Activated T-helper 1 cell treated with anti-CD3 and anti-CD28 coated beads, Interleukin-12 subunit alpha, Interleukin-12 subunit beta, Interleukin-2, Interleukin-4 antibody, amounts not matched to agents 30 ng/mL and 10 ng/mL and 1 ng/mL, durations not matched to agents 14 hours and 24 hours and 36 hours (primary cell): ENCODE measurements at regions of chr2 and their contacts with region 1.

Region 1: DNA sequence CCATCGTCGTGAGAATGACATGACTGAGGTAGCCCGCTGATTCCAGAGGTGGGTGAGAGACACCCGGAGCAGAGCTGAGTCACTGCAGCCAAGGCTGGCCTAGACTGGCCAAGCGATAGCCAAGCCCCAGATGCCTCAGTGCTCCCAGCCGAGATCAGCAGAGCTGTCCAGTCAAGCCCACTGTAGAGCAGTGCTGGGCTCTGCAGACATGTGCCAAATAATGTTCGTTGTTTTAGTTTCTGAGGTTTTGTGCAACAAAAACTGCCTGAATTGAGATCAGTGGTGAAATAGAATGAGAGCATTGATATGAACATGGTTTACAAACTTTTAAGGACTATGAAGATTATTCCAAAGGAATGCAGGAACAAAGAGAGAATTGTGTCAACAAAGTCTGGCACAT is 42.1 kb downstream of the INSIG2 start:
- DNase-seq: no peak
- H3K4me3 Mint-ChIP-seq: no peak overlapping the region
- H3K27ac Mint-ChIP-seq: no peak overlapping the region
- H3K4me1 Mint-ChIP-seq: peaks cover 14% of the 10 kb centered on the region
- H3K27me3 Mint-ChIP-seq: peaks cover 4% of the 10 kb centered on the region

Region 2: DNA sequence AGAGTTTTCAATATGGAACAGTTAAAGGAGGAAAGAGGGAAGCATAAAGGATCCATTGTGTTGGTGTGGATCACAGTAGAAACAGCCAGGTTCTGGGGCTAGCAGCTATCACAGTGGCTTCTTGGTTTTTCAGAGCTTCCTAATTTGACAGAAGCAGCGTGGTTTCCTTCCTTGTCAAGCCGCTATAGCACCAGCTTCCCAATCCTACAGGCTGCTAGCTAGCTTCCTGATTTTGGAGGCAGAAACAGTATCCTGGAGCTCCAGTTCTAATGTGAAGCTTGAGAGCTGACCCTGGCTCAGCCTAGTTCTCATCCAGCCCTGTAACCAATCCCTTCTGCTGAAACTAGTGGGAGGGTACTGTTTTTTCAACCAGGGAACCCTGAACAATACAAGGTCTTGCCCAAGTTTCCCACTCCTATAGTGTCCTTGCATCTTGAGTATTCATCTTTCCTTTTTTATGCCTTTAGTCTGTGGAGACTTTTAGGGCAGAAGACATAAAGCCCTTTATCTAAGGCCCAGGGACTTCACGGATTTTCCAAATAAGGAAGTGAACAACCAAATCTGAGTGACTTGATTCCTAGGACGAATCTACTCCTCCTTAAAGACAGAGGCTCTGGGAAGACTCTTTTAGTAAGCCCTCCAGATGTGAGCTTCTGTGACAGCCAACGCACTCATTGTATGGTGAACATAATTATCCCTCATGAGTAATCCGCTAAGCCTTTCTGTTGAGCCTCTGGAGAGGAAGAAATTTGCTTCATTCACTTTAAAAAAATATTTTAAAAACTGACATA is 150.3 kb before region 1 on chr2:
- intact Hi-C with region 1: no loop called
- DNase-seq: no peak
- H3K4me3 Mint-ChIP-seq: no peak overlapping the region
- H3K27ac Mint-ChIP-seq: no peak overlapping the region
- H3K4me1 Mint-ChIP-seq: peaks cover 6% of the 10 kb centered on the region
- H3K27me3 Mint-ChIP-seq: no peaks in the 10 kb centered on the region

Region 3: GRCh38 chr2:118088051-118089024 is 42.0 kb before region 1 on chr2 and contains the start of gene INSIG2:
- intact Hi-C with region 1: no loop called
- DNase-seq: peak; percentile 92
- H3K4me3 Mint-ChIP-seq: peak within 1 kb of the TSS; percentile 94
- H3K27ac Mint-ChIP-seq: peak within 1 kb of the TSS; percentile 95
- H3K4me1 Mint-ChIP-seq: peaks cover 20% of the 10 kb centered on the region
- H3K27me3 Mint-ChIP-seq: no peaks in the 10 kb centered on the region
- total RNA-seq, gene INSIG2: 31.3 and 34.6 TPM in 2 replicates

Region 4: GRCh38 chr2:118103951-118104940 is 26.1 kb before region 1 on chr2:
- intact Hi-C with region 1: loop called (anchors 2 kb)
- DNase-seq: no peak
- H3K4me3 Mint-ChIP-seq: no peak overlapping the region
- H3K27ac Mint-ChIP-seq: peak overlapping the region; percentile 41
- H3K4me1 Mint-ChIP-seq: peaks cover 61% of the 10 kb centered on the region
- H3K27me3 Mint-ChIP-seq: no peaks in the 10 kb centered on the region

Region 5: GRCh38 chr2:118148809-118149208 is 18.4 kb after region 1 on chr2:
- intact Hi-C with region 1: loop called (anchors 1 kb)
- DNase-seq: no peak
- H3K4me3 Mint-ChIP-seq: no peak overlapping the region
- H3K27ac Mint-ChIP-seq: no peak overlapping the region
- H3K4me1 Mint-ChIP-seq: no peaks in the 10 kb centered on the region
- H3K27me3 Mint-ChIP-seq: peaks cover 8% of the 10 kb centered on the region

Region 6: DNA sequence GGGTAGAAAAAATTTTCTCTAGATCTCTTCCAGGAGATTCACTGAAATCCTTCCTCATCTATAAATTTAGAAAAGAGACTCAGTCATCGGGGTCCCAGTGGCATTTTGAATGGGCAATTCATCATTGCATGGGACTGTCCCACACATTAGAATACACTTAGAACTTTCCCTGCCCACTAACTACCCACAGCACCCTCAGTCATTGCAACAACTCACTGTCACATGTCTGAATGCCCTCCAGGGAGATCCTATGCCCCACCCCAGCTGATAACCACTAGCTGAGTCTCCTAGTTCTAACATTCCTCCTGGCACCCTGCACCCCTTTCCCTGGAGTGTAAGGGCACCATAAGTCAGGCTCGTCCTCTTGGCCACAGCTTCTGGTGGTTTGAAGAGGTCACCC is 47.5 kb after region 1 on chr2:
- intact Hi-C with region 1: loop called (anchors 2 kb)
- DNase-seq: no peak
- H3K4me3 Mint-ChIP-seq: no peak overlapping the region
- H3K27ac Mint-ChIP-seq: peak overlapping the region; percentile 98
- H3K4me1 Mint-ChIP-seq: peaks cover 48% of the 10 kb centered on the region
- H3K27me3 Mint-ChIP-seq: no peaks in the 10 kb centered on the region

Region 7: GRCh38 chr2:118186110-118186857 is 55.9 kb after region 1 on chr2:
- intact Hi-C with region 1: loop called (anchors 2 kb)
- DNase-seq: peak; percentile 83
- H3K4me3 Mint-ChIP-seq: peak overlapping the region; percentile 90
- H3K27ac Mint-ChIP-seq: peak overlapping the region; percentile 98
- H3K4me1 Mint-ChIP-seq: peaks cover 53% of the 10 kb centered on the region
- H3K27me3 Mint-ChIP-seq: no peaks in the 10 kb centered on the region